Ascending aorta (tissue), 2 donors: ENCODE measurements at regions of chr10 and their contacts with region 1.

Region 1: GRCh38 chr10:67884313-67884841 is at the start of gene SIRT1:
- DNase-seq: peak; percentile 85 to 98
- H3K4me3 ChIP-seq: peak within 1 kb of the TSS; percentile 82 to 85
- H3K27ac ChIP-seq: peak within 1 kb of the TSS; percentile 91 to 94
- H3K4me1 ChIP-seq: peaks cover 0 to 14% of the 10 kb centered on the region in 2 donors
- H3K27me3 ChIP-seq: no peaks in the 10 kb centered on the region
- CTCF ChIP-seq: peak in 1 of 3 experiments; percentile 25
- total RNA-seq, gene SIRT1: 7.6 TPM

Region 2: GRCh38 chr10:67764012-67764822 is 120.2 kb before region 1 on chr10:
- intact Hi-C with region 1: loop called (anchors 10 kb)
- DNase-seq: peak; percentile 75 to 97
- H3K4me3 ChIP-seq: peak overlapping the region; percentile 76 to 78
- H3K27ac ChIP-seq: peak overlapping the region; percentile 92 to 95
- H3K4me1 ChIP-seq: no peaks in the 10 kb centered on the region
- H3K27me3 ChIP-seq: no peaks in the 10 kb centered on the region
- CTCF ChIP-seq: no peak

Region 3: GRCh38 chr10:67803588-67804394 is 80.6 kb before region 1 on chr10:
- intact Hi-C with region 1: no loop called
- DNase-seq: no peak
- H3K4me3 ChIP-seq: no peak overlapping the region
- H3K27ac ChIP-seq: no peak overlapping the region
- H3K4me1 ChIP-seq: no peaks in the 10 kb centered on the region
- H3K27me3 ChIP-seq: no peaks in the 10 kb centered on the region
- CTCF ChIP-seq: no peak

Region 4: DNA sequence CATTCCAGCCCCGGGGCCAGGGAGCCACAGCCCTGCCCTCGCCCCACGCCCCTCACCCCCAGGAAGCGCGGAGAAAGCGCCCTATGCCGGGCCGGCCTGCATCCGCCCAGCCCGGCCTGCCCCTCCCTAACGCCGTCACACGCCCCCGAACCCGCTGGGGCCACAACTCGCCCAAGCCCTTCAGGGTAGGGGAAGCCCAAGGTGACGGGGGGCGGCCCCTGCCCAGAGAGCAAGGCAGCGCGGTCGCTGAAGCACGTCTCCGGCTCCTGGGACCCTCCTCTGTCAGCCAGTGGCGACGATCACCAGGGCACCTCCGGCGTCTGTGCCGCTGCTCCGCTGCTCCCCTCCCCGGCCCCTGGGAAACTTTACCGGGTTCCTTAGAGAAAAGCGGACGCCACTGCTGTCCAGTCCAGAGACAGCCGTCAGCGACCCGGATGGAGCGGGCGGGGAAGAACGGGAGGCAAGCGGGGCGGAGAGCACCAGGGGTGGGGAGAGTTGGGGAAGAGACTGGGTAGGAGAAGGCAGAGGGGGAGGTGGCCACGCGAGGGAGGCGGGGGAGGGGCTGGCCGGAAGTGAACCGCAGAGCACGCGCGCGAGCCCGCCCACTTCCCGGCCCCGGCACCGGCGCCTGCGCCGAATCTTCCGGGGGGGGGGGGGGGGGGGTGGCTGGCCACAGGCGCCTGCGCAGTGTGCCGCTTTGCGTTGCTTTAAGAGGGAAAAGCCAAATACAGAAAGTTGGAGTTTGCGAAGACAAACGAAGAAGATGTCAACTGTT is 190.6 kb after region 1 on chr10 and contains the start of gene HERC4:
- intact Hi-C with region 1: loop called (anchors 2 kb)
- DNase-seq: peak; percentile 72 to 97
- H3K4me3 ChIP-seq: peak within 1 kb of the TSS; percentile 87 to 99
- H3K27ac ChIP-seq: peak within 1 kb of the TSS; percentile 99 to 100
- H3K4me1 ChIP-seq: peaks cover 0 to 6% of the 10 kb centered on the region in 2 donors
- H3K27me3 ChIP-seq: no peaks in the 10 kb centered on the region
- CTCF ChIP-seq: no peak
- total RNA-seq, gene HERC4: 15.0 TPM

Region 5: GRCh38 chr10:68331455-68332258 is 447.3 kb after region 1 on chr10 and contains the start of gene HNRNPH3:
- intact Hi-C with region 1: loop called (anchors 1 kb)
- DNase-seq: peak; percentile 85 to 98
- H3K4me3 ChIP-seq: peak within 1 kb of the TSS; percentile 94 to 98
- H3K27ac ChIP-seq: peak within 1 kb of the TSS; percentile 100
- H3K4me1 ChIP-seq: peaks cover 4 to 5% of the 10 kb centered on the region in 2 donors
- H3K27me3 ChIP-seq: no peaks in the 10 kb centered on the region
- CTCF ChIP-seq: no peak
- total RNA-seq, gene HNRNPH3: 12.6 TPM

Region 6: GRCh38 chr10:68526626-68527307 is 642.4 kb after region 1 on chr10:
- intact Hi-C with region 1: loop called (anchors 10 kb)
- DNase-seq: no peak
- H3K4me3 ChIP-seq: peak overlapping the region; percentile 94 to 95
- H3K27ac ChIP-seq: peak overlapping the region; percentile 95 to 97
- H3K4me1 ChIP-seq: no peaks in the 10 kb centered on the region
- H3K27me3 ChIP-seq: no peaks in the 10 kb centered on the region
- CTCF ChIP-seq: no peak